Activated CD4-positive, alpha-beta memory T cell treated with anti-CD3 and anti-CD28 coated beads for 36 hours (primary cell): ENCODE measurements at regions of chr1 and their contacts with region 1.

Region 1: GRCh38 chr1:155562581-155563376 is at the start of gene ASH1L:
- DNase-seq: peak; percentile 95
- H3K4me3 Mint-ChIP-seq: peak within 1 kb of the TSS; percentile 99
- H3K27ac Mint-ChIP-seq: peak within 1 kb of the TSS; percentile 98
- H3K4me1 Mint-ChIP-seq: peaks cover 46% of the 10 kb centered on the region
- H3K27me3 Mint-ChIP-seq: no peaks in the 10 kb centered on the region
- total RNA-seq, gene ASH1L: 28.8 to 29.6 TPM

Region 2: DNA sequence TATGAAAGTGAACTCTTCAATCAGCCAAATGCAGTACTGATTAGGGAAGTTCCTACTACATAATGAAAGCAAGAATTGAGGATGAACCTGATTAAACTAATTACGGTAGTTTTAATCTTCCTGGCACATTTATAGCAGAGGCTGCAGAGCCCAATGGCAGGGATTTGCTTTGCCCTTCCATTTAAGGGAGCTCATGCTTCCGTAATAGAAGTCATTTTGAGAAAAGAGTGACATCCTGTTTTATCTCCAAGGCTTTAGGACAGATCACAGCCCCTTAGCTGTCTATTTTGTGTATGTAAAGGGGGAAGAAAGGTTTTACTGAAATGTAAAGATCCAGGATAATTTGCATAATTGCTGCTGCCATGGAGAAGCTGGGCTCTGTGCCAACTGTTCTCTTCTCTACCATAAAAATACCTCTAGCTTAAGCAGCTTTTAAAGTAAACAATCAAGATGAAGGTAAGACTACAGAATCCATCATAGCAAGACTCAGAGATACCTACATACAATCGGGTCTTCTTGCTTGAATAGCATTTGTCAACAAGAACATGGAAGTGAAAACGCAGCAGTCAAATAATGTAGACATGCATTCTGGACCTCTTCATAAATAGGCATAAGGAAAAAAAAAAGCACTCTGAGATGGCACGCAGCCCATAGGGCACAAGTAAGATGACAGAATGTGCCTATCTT is 62.7 kb before region 1 on chr1:
- CTCF ChIA-PET with region 1: no interaction called
- POLR2A ChIA-PET with region 1: no interaction called
- intact Hi-C with region 1: no loop called
- DNase-seq: no peak
- H3K4me3 Mint-ChIP-seq: no peak overlapping the region
- H3K27ac Mint-ChIP-seq: peak overlapping the region; percentile 18
- H3K4me1 Mint-ChIP-seq: peaks cover 31% of the 10 kb centered on the region
- H3K27me3 Mint-ChIP-seq: no peaks in the 10 kb centered on the region

Region 3: DNA sequence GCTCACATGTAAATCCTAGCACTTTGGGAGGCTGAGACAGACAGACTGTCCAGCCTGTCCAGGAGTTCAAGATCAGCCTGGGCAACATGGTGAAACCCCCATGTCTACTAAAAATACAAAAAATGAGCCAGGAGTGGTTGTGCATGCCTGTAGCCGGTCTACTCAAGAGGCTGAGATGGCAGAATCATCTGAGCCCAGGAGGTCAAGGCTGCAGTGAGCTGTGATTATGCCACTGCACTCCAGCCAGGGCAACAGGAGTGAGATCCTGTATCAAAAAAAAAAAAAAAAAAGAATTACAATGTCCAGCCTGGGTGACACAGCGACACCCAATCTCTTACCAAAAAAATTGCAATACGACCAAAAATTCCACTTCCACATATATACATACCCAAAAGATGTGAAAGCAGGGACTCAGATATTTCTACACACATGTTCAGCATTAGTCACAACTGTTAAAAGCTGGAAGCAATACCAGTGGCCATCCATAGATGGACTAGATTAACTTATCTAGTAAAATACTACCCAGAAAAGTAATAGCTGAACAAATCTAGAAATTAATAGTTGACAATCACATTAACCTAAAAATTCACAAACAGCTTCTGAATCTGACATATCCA is 49.4 kb before region 1 on chr1:
- CTCF ChIA-PET with region 1: no interaction called
- POLR2A ChIA-PET with region 1: no interaction called
- intact Hi-C with region 1: loop called (anchors 10 kb)
- DNase-seq: no peak
- H3K4me3 Mint-ChIP-seq: no peak overlapping the region
- H3K27ac Mint-ChIP-seq: no peak overlapping the region
- H3K4me1 Mint-ChIP-seq: peaks cover 49% of the 10 kb centered on the region
- H3K27me3 Mint-ChIP-seq: no peaks in the 10 kb centered on the region

Region 4: DNA sequence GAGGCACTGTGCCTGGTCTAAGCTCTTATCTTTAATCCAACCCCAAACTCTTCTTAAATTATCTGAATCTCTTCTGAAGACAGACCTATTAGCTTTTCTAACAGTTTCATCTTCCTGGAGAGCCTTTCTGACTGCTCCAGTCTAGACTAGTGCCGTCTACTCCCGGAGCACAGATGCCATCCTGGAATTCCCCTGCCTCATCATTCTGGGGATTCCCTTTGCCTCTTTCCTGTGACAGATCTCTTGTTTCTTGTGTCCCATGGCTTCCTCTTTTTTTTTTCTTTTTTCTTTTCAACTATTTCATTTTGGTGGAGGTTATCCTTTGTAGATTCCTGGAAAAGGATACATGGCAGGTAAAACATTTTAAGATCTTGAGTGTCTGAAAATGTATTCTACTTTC is 602.3 kb after region 1 on chr1:
- CTCF ChIA-PET with region 1: no interaction called
- POLR2A ChIA-PET with region 1: no interaction called
- intact Hi-C with region 1: no loop called
- DNase-seq: peak; percentile 56
- H3K4me3 Mint-ChIP-seq: no peak overlapping the region
- H3K27ac Mint-ChIP-seq: peak overlapping the region; percentile 84
- H3K4me1 Mint-ChIP-seq: peaks cover 46% of the 10 kb centered on the region
- H3K27me3 Mint-ChIP-seq: no peaks in the 10 kb centered on the region